HEK293 (cell line): ENCODE measurements at regions of chr6 and their contacts with region 1.

Region 1: GRCh38 chr6:135438907-135439535 is 58.5 kb downstream of the AHI1 start:
- H3K4me3 ChIP-seq: no peak overlapping the region
- H3K27ac ChIP-seq: no peak overlapping the region
- H3K4me1 ChIP-seq: no peaks in the 10 kb centered on the region
- CTCF ChIP-seq: no peak

Region 2: GRCh38 chr6:135382182-135382628 is 56.8 kb before region 1 on chr6:
- CTCF ChIA-PET with region 1: no interaction called
- POLR2A ChIA-PET with region 1: no interaction called
- H3K4me3 ChIP-seq: no peak overlapping the region
- H3K27ac ChIP-seq: no peak overlapping the region
- H3K4me1 ChIP-seq: no peaks in the 10 kb centered on the region
- CTCF ChIP-seq: no peak

Region 3: DNA sequence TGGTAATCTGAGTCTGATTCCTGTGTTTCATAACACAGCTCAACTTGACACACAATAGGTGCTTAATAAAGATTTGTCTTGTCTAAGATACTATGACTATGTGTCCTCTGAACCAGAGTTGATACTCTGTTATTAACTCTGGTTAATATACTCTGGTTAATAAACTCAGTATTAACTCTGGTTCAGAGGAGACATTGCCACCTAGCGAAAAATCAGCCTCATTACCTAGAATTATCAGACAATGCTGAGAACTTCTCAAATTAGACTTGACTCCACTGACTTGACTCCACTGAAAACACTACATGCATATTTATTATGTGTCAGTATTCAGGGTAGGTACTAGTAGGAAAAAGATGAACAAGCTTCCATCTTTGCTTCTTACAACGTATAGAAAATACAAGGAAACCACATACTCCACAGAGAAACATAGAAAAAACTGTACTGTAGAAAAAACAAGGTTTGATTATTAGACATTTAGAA is 15.3 kb before region 1 on chr6:
- CTCF ChIA-PET with region 1: interaction called, 11 read pairs
- POLR2A ChIA-PET with region 1: no interaction called
- H3K4me3 ChIP-seq: no peak overlapping the region
- H3K27ac ChIP-seq: no peak overlapping the region
- H3K4me1 ChIP-seq: no peaks in the 10 kb centered on the region
- CTCF ChIP-seq: no peak